Left cardiac atrium (tissue), 4 donors: ENCODE measurements at regions of chrX and their contacts with region 1.

Region 1: DNA sequence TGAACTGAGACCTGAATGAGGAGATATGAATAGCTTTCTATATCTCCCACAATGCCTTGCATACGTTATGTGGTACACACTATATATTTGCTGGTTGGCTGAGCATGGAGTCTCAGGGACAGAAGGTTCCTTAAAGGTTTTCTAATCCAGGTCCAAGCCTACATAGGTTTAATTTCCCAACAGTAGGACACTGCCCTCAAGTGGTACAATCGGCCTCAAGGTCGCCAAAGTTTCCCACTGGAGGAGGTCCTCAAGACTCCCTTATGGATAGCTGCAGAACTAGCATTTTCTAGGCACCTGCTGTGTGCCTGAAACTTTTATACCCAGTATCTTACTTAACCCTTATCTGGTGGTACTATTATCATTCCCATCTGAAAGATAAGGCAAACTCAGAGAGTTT is 21.0 kb upstream of the EFNB1 start:
- DNase-seq: no peak
- ATAC-seq: peak; percentile 47 to 53

Region 2: GRCh38 chrX:68732906-68733493 is 74.8 kb before region 1 on chrX:
- intact Hi-C with region 1: loop called (anchors 2 to 5 kb)
- DNase-seq: peak; percentile 65
- ATAC-seq: peak; percentile 80 to 81

Region 3: GRCh38 chrX:69000877-69001276 is 193.1 kb after region 1 on chrX:
- intact Hi-C with region 1: no loop called
- DNase-seq: no peak
- ATAC-seq: no peak